Mammary epithelial cell (primary cell): ENCODE measurements at regions of chr5 and their contacts with region 1.

Region 1: GRCh38 chr5:38666668-38667498 is 110.4 kb upstream of the LIFR start:
- DNase-seq: no peak
- H3K4me3 ChIP-seq: no peak overlapping the region
- H3K27ac ChIP-seq: no peak overlapping the region
- H3K4me1 ChIP-seq: no peaks in the 10 kb centered on the region
- H3K27me3 ChIP-seq: no peaks in the 10 kb centered on the region
- CTCF ChIP-seq: peak; percentile 59 to 63

Region 2: DNA sequence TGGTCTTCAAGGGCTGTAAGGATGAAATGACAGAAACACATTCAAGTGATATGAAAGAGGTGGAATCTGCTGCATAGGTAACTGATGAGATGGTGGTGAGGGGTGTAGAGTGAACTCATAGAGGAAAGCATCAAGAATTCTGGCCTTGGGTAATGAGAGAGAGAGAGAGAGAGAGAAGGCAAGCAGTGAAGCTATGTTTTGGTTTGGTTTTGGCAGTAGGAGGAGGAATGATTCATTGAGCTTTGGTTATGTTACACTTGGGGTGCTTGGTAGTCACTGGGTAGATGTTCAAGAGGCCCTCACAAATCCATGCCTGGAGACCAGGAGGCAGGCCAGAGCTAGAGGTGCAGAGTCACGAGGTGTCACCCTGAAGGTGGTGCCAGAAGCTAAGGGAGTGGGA is 319.0 kb before region 1 on chr5:
- CTCF ChIA-PET with region 1: no interaction called
- dilution Hi-C with region 1: no loop called
- in situ Hi-C with region 1: no loop called
- intact Hi-C with region 1: no loop called
- DNase-seq: peak; percentile 40
- H3K4me3 ChIP-seq: no peak overlapping the region
- H3K27ac ChIP-seq: peak overlapping the region; percentile 4
- H3K4me1 ChIP-seq: peaks cover 12% of the 10 kb centered on the region
- H3K27me3 ChIP-seq: no peaks in the 10 kb centered on the region
- CTCF ChIP-seq: no peak

Region 3: GRCh38 chr5:38382898-38383297 is 284.0 kb before region 1 on chr5:
- CTCF ChIA-PET with region 1: interaction called, 3 read pairs
- dilution Hi-C with region 1: no loop called
- in situ Hi-C with region 1: no loop called
- intact Hi-C with region 1: loop called (anchors 1 kb)
- DNase-seq: peak; percentile 50
- H3K4me3 ChIP-seq: no peak overlapping the region
- H3K27ac ChIP-seq: no peak overlapping the region
- H3K4me1 ChIP-seq: no peaks in the 10 kb centered on the region
- H3K27me3 ChIP-seq: peaks cover 3% of the 10 kb centered on the region
- CTCF ChIP-seq: peak; percentile 86 to 92

Region 4: DNA sequence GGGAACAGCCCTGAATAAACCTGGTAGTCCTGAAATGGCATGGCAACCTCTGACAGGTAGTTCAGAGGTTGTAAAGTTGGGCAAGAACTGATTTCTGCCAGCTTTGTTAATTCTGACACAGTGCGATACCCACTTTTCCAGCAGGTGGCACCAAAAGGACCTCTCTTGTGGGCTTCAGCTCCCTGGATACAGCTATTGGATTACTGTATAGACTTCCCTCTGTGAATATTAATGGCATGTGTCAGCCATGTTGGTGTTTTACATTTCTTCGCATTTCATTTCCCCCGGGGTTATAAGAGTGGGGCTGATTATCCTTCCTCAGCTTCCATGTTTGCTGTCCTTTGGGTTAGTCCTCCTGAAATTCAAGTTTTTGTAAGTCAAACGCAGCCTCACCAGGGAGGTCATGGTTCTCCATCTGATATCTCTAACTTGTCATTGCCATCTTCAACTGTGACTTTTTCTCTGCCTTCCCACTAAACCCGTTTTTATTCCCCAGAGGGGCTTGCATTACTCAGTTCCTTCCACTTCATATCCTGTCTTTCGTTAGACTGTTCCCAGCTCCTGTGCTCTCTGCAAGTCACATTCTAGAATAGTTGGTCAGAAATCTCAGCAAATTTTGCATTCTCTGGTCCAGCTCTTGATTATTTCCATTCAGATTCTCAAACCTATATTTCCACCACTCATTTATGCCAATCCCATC is 246.0 kb before region 1 on chr5:
- CTCF ChIA-PET with region 1: no interaction called
- dilution Hi-C with region 1: no loop called
- in situ Hi-C with region 1: no loop called
- intact Hi-C with region 1: loop called (anchors 1 kb)
- DNase-seq: peak; percentile 57
- H3K4me3 ChIP-seq: no peak overlapping the region
- H3K27ac ChIP-seq: no peak overlapping the region
- H3K4me1 ChIP-seq: no peaks in the 10 kb centered on the region
- H3K27me3 ChIP-seq: no peaks in the 10 kb centered on the region
- CTCF ChIP-seq: peak; percentile 83 to 91

Region 5: GRCh38 chr5:38433160-38433861 is 233.6 kb before region 1 on chr5:
- CTCF ChIA-PET with region 1: no interaction called
- dilution Hi-C with region 1: no loop called
- in situ Hi-C with region 1: loop called in 1 of 2 experiments (anchors 10 kb)
- intact Hi-C with region 1: no loop called
- DNase-seq: no peak
- H3K4me3 ChIP-seq: no peak overlapping the region
- H3K27ac ChIP-seq: no peak overlapping the region
- H3K4me1 ChIP-seq: peaks cover 4% of the 10 kb centered on the region
- H3K27me3 ChIP-seq: no peaks in the 10 kb centered on the region
- CTCF ChIP-seq: no peak

Region 6: DNA sequence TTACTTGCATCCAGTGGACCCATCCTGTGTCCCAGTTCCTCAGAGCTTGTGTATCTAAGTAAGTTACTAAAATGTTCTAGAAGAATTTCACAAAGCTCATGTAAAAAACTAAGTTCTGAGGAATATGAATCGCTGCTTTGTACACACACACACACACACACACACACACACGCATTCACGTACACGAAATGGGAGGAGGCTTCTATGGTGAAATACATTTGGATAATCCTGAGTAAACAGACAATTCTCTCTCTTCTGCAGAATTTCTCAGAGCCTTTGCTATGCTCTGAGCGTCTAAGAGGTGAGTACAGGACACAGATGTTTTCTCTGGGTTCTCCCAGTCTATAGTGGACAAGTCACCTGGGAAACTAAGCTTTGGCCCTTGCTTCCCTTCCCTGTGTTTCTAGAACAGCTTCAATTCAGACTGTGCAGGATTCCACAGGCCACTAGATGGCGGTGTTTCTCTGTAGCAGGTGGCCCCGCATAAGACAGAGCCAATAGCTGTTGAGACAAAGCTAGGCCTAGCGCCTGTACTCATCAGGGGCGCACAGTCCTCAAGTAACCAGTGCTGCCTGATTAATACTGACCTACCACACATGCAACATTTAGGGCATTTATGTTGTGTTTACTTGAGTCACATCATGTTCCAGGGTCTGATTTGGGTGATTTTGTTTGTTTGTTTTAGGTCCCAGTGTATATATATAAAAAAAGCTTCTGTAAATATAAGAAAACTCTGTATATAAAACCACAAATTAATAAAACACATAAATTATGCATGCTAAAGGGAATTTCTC is 225.2 kb before region 1 on chr5:
- CTCF ChIA-PET with region 1: interaction called, 10 read pairs
- dilution Hi-C with region 1: no loop called
- in situ Hi-C with region 1: loop called in 1 of 2 experiments (anchors 10 kb)
- intact Hi-C with region 1: loop called (anchors 1 kb)
- DNase-seq: peak; percentile 73
- H3K4me3 ChIP-seq: no peak overlapping the region
- H3K27ac ChIP-seq: no peak overlapping the region
- H3K4me1 ChIP-seq: no peaks in the 10 kb centered on the region
- H3K27me3 ChIP-seq: no peaks in the 10 kb centered on the region
- CTCF ChIP-seq: peak; percentile 98

Region 7: GRCh38 chr5:38551030-38552017 is 115.6 kb before region 1 on chr5:
- CTCF ChIA-PET with region 1: no interaction called
- dilution Hi-C with region 1: no loop called
- in situ Hi-C with region 1: no loop called
- intact Hi-C with region 1: loop called (anchors 1 kb)
- DNase-seq: peak; percentile 23
- H3K4me3 ChIP-seq: no peak overlapping the region
- H3K27ac ChIP-seq: no peak overlapping the region
- H3K4me1 ChIP-seq: peaks cover 15% of the 10 kb centered on the region
- H3K27me3 ChIP-seq: no peaks in the 10 kb centered on the region
- CTCF ChIP-seq: peak; percentile 77 to 92

Region 8: GRCh38 chr5:38556599-38557305 is 110.1 kb before region 1 on chr5 and contains the start of gene LIFR:
- CTCF ChIA-PET with region 1: no interaction called
- dilution Hi-C with region 1: no loop called
- in situ Hi-C with region 1: no loop called
- intact Hi-C with region 1: loop called (anchors 1 kb)
- DNase-seq: peak; percentile 79
- H3K4me3 ChIP-seq: peak within 1 kb of the TSS; percentile 60 to 94 (median 89)
- H3K27ac ChIP-seq: peak within 1 kb of the TSS; percentile 64
- H3K4me1 ChIP-seq: peaks cover 11% of the 10 kb centered on the region
- H3K27me3 ChIP-seq: peaks cover 1% of the 10 kb centered on the region
- CTCF ChIP-seq: no peak
- total RNA-seq, gene LIFR: 4.4 to 26.3 TPM